ENCODE measurements at regions of chr22 and their contacts with region 1.

Region 1: GRCh38 chr22:43796567-43796966 is 15.5 kb downstream of the EFCAB6 start:
- DNase-seq: peak; percentile 62
- H3K4me3 ChIP-seq: no peak overlapping the region
- H3K27ac ChIP-seq: no peak overlapping the region
- H3K4me1 ChIP-seq: no peaks in the 10 kb centered on the region
- H3K27me3 ChIP-seq: no peaks in the 10 kb centered on the region

Region 2: DNA sequence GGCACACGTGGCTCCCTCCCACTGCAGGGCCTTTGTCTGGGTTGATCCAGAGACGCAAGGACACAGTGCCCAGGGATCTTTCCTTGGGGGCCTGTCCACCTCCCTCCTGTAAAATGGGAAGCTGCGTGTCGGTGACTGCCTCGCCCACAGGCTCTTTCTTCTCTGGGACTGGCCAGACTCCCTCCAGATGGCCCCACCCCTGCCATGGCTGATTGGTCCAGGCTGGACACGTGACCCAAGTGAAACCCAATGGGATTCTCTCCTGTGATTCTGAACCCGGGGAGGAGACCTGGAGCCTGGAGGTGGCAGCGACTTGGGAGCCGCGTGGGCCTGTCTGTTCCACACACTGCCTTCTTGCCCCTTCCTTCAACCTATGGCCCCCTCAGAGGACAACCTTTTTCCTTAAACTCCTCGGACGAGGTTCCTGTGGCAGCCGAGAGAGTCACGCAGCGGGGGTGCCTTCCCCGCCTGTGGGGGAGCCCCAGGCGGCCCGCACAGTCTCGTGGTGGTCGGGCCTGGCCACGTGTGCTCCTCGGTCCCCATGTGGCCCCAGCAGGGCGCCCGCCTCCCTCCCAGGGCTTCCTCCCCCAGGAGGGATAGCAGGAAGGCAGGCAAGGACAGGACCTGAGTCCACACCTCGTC is 397.1 kb before region 1 on chr22:
- in situ Hi-C with region 1: loop called (anchors 10 kb)
- DNase-seq: no peak
- H3K4me3 ChIP-seq: no peak overlapping the region
- H3K27ac ChIP-seq: no peak overlapping the region
- H3K4me1 ChIP-seq: no peaks in the 10 kb centered on the region
- H3K27me3 ChIP-seq: peaks cover 3% of the 10 kb centered on the region

Measured in GM23248 (cell line).